ENCODE measurements at regions of chr10 and their contacts with region 1.

Region 1: GRCh38 chr10:30027057-30028005 is 32.1 kb downstream of the JCAD start:
- DNase-seq: peak; percentile 95
- H3K4me3 Mint-ChIP-seq: peak overlapping the region; percentile 97
- H3K27ac Mint-ChIP-seq: peak overlapping the region; percentile 91
- H3K4me1 Mint-ChIP-seq: peaks cover 62% of the 10 kb centered on the region
- H3K27me3 Mint-ChIP-seq: no peaks in the 10 kb centered on the region

Region 2: GRCh38 chr10:29482591-29483431 is 544.5 kb before region 1 on chr10:
- intact Hi-C with region 1: loop called (anchors 2 kb)
- DNase-seq: peak; percentile 22
- H3K4me3 Mint-ChIP-seq: peak overlapping the region; percentile 0
- H3K27ac Mint-ChIP-seq: peak overlapping the region; percentile 74
- H3K4me1 Mint-ChIP-seq: peaks cover 56% of the 10 kb centered on the region
- H3K27me3 Mint-ChIP-seq: no peaks in the 10 kb centered on the region

Region 3: DNA sequence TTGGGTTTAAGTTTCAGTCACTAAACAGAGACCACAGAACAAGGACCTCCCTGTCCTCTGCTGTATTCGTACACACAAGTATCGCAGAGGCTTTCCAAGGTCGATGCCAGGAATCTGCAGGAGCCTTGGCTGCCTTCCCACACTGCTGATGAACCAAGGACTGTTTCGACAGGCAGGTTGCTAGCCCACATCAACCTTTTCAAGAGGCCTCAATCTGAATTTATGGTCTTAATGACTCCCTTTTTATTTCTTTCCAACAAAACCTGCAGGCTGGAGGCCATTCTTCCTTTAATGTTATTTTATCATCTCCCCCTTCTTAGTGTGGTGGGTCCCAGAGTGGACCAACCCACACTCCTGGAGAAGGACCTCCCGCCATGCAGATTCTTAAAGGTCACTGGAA is 13.6 kb before region 1 on chr10:
- intact Hi-C with region 1: loop called (anchors 1 kb)
- DNase-seq: no peak
- H3K4me3 Mint-ChIP-seq: peak overlapping the region; percentile 70
- H3K27ac Mint-ChIP-seq: peak overlapping the region; percentile 94
- H3K4me1 Mint-ChIP-seq: peaks cover 68% of the 10 kb centered on the region
- H3K27me3 Mint-ChIP-seq: no peaks in the 10 kb centered on the region

Region 4: DNA sequence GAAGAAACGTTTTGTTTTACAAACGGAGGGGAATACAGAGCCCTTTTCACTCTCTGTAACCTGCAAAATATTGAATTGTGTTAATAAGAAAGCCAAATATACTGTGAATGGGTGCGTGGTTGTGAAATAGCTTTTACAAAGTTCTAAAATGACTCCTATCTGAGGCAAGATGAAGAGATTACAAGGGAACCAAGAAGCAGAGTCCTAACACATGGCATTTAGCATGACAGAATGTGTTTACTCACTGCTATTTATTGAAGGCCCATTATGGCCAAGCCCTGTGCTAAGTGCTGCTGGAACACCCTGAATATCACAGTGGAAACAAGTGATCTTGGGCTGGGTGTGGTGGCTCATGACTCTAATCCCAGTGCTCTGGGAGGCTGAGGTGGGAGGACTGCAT is 19.1 kb after region 1 on chr10:
- intact Hi-C with region 1: loop called (anchors 1 kb)
- DNase-seq: no peak
- H3K4me3 Mint-ChIP-seq: no peak overlapping the region
- H3K27ac Mint-ChIP-seq: peak overlapping the region; percentile 50
- H3K4me1 Mint-ChIP-seq: peaks cover 76% of the 10 kb centered on the region
- H3K27me3 Mint-ChIP-seq: peaks cover 9% of the 10 kb centered on the region

Region 5: GRCh38 chr10:30348378-30348776 is 321.0 kb after region 1 on chr10:
- intact Hi-C with region 1: loop called (anchors 5 kb)
- DNase-seq: no peak
- H3K4me3 Mint-ChIP-seq: peak overlapping the region; percentile 86
- H3K27ac Mint-ChIP-seq: peak overlapping the region; percentile 81
- H3K4me1 Mint-ChIP-seq: peaks cover 31% of the 10 kb centered on the region
- H3K27me3 Mint-ChIP-seq: peaks cover 2% of the 10 kb centered on the region

Measured in activated T-helper 2 cell treated with anti-CD3 and anti-CD28 coated beads, Interferon-gamma antibody, Interleukin-2, Interleukin-4, amounts not matched to agents 10 μg/mL and 5 μg/mL and 100 μg/mL, durations not matched to agents 14 hours and 24 hours and 36 hours (primary cell).